Naive thymus-derived CD4-positive, alpha-beta T cell (primary cell): ENCODE measurements at regions of chr9 and their contacts with region 1.

Region 1: DNA sequence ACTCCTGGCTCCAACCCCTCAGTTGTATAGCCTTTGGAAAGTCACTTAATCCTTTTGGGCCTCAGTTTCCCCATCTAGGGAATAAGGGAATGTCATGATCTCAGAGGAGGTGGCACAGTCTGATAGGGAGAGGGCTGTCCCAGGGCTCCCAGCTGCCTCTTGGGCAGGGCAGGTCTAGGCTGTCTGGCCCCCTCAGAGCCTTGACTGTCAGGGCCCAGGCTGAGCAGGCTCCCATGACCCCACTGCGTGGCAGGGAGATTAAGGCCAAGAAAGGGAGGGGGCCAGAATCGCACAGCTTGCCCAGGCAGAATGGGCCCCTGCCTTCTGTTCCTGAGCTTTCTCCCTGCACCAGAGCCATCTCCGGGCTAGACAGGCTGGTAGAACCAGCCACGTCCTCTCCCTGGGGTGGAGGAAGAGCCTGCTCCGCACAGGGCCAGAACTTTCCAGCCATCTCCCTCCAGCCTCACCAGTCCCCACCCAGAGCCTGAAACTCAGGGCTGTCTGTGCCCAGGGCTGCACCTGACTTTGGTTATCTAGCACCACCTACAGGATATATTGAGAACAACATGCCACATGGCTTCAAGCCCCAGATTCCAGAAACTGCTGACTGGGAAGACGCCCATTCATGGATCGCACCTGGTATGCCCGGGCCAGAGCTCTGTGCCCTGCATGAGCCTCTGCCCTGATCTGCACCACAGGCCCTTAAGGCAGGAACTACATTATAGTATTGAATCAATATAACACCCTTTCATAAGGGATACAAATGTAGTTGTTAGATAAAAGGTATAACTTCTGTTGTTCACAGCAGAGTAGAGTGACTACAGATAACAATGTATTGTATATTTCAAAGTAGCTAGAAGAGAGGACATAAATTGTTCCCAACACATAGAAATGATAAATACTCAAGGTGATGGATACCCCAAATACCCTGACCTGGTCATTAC is 32.0 kb downstream of the NAIF1 start:
- DNase-seq: peak; percentile 33 to 86 (median 78)
- ATAC-seq: peak; percentile 82
- H3K4me3 ChIP-seq: peak overlapping the region; percentile 18
- H3K4me3 Mint-ChIP-seq: peak overlapping the region; percentile 44 to 70 (median 60)
- H3K27ac ChIP-seq: peak overlapping the region; percentile 63
- H3K27ac Mint-ChIP-seq: peak overlapping the region; percentile 70 to 96 (median 90)
- H3K4me1 ChIP-seq: peaks cover 40 to 44% of the 10 kb centered on the region in 2 donors
- H3K4me1 Mint-ChIP-seq: peaks cover 8 to 45% (median 37%) of the 10 kb centered on the region in 7 donors
- H3K27me3 ChIP-seq: no peaks in the 10 kb centered on the region
- H3K27me3 Mint-ChIP-seq: no peaks in the 10 kb centered on the region

Region 2: DNA sequence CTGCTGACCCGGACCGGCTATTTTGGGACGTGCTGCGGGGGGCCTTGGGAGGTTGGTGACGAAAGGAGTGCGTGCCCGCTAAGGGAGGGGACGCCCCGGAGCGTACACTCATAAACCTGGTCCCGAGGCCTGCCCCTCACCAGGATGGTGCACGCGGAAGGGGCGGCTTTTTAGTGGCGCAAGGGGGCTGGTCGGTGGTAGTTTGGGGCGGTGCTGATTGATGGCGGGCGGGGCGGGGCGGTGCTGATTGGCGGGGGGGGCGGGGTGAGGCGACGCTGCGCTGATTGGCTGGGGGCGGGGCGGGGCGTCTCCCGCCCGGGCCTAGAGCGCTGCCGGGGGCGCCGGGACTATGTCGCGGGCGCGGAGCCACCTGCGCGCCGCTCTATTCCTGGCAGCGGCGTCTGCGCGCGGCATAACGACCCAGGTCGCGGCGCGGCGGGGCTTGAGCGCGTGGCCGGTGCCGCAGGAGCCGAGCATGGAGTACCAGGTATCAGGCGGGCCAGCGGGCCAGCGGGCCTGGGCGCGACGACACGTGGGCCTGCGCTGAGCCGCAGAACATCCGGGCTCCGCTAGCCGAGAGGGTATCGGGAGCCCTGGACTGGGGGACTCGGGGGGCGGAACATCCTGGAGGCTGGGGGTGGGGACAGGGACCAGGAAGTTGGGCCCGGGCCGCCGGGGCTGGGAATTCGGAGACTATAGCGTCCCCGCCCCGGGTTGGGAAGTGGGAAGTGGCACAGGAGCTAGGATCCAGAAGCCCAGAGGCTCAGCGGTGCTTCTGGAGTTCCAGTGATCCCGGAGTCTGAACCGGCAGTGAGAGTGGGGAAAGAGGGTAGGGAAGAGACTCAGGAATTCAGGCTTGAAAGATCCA is 232.3 kb before region 1 on chr9 and contains the start of gene FPGS:
- CTCF ChIA-PET with region 1: no interaction called
- POLR2A ChIA-PET with region 1: no interaction called
- intact Hi-C with region 1: no loop called
- DNase-seq: peak; percentile 77 to 86 (median 85)
- ATAC-seq: peak; percentile 94
- H3K4me3 ChIP-seq: peak within 1 kb of the TSS; percentile 81
- H3K4me3 Mint-ChIP-seq: peak within 1 kb of the TSS; percentile 81 to 95 (median 90)
- H3K27ac ChIP-seq: peak within 1 kb of the TSS; percentile 93
- H3K27ac Mint-ChIP-seq: peak within 1 kb of the TSS; percentile 80 to 95 (median 89)
- H3K4me1 ChIP-seq: peaks cover 12 to 19% of the 10 kb centered on the region in 2 donors
- H3K4me1 Mint-ChIP-seq: peaks cover 4 to 31% (median 20%) of the 10 kb centered on the region in 7 donors
- H3K27me3 ChIP-seq: no peaks in the 10 kb centered on the region
- H3K27me3 Mint-ChIP-seq: no peaks in the 10 kb centered on the region
- total RNA-seq, gene FPGS: 90.4 to 123 (median 95.4) TPM

Region 3: DNA sequence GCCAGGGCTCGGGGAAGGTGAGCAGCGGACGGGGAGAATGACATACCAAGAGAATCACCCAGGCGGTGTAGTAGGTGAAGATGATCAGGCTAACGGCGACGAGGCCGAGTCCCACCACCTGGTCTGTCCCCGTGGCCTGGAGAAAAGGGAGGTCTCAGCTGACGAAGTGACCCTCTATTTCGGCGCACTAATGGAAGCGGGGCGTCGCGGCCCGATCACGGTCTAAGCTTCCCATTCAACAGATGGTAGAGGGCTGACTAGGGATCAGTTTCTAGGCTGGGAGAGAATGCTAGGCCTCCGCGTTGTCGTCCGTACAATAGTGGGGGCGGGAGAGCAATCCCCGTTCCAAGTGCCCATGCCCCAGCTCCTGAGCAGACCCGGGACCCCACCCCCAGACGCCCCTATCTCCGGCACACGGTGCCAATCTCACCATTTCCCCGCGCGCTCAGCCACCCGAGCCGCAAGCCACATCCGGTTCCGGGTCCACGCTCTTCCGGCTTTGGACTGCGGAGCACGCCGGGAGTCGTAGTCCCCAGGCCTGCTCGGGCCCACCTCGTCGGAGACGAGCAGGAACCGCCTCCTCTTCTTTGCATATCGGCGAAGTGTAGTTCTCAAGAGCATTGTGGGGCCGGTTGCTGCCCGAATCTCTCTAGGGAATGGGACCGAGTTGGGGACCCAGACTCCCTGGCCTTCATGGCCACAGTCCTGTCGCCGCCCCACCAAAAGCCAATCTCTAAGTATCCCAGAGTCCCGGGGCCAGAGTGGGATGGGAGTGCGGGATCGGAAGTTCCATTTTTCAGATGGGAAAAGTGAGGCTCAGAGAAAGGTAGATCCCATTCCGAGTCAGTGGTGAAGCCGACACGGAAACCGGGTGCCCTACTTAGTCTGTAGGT is 97.5 kb before region 1 on chr9 and contains the start of gene DPM2:
- CTCF ChIA-PET with region 1: interaction called, 110 read pairs
- POLR2A ChIA-PET with region 1: interaction called, 62 read pairs
- intact Hi-C with region 1: no loop called
- DNase-seq: peak; percentile 71 to 90 (median 88)
- ATAC-seq: peak; percentile 96
- H3K4me3 ChIP-seq: peak within 1 kb of the TSS; percentile 88
- H3K4me3 Mint-ChIP-seq: peak within 1 kb of the TSS; percentile 85 to 98 (median 92)
- H3K27ac ChIP-seq: peak within 1 kb of the TSS; percentile 78
- H3K27ac Mint-ChIP-seq: peak within 1 kb of the TSS; percentile 88 to 99 (median 95)
- H3K4me1 ChIP-seq: peaks cover 24 to 25% of the 10 kb centered on the region in 2 donors
- H3K4me1 Mint-ChIP-seq: peaks cover 37 to 61% (median 48%) of the 10 kb centered on the region in 7 donors
- H3K27me3 ChIP-seq: no peaks in the 10 kb centered on the region
- H3K27me3 Mint-ChIP-seq: peaks cover 0 to 4% (median 0%) of the 10 kb centered on the region in 5 donors
- total RNA-seq, gene DPM2: 29.1 to 84.4 (median 56.8) TPM

Region 4: GRCh38 chr9:127949827-127950512 is 85.1 kb before region 1 on chr9:
- CTCF ChIA-PET with region 1: interaction called, 253 read pairs
- POLR2A ChIA-PET with region 1: interaction called, 1,511 read pairs
- intact Hi-C with region 1: loop called (anchors 1 kb)
- DNase-seq: no peak
- ATAC-seq: peak; percentile 31
- H3K4me3 ChIP-seq: no peak overlapping the region
- H3K4me3 Mint-ChIP-seq: peak overlapping the region in 9 of 10 donors; percentile 25 to 75 (median 63)
- H3K27ac ChIP-seq: peak overlapping the region; percentile 84
- H3K27ac Mint-ChIP-seq: peak overlapping the region; percentile 58 to 98 (median 90)
- H3K4me1 ChIP-seq: peaks cover 36 to 61% of the 10 kb centered on the region in 2 donors
- H3K4me1 Mint-ChIP-seq: peaks cover 41 to 87% (median 63%) of the 10 kb centered on the region in 7 donors
- H3K27me3 ChIP-seq: no peaks in the 10 kb centered on the region
- H3K27me3 Mint-ChIP-seq: no peaks in the 10 kb centered on the region

Region 5: GRCh38 chr9:127970401-127971313 is 64.4 kb before region 1 on chr9:
- CTCF ChIA-PET with region 1: interaction called, 262 read pairs
- POLR2A ChIA-PET with region 1: interaction called, 1,511 read pairs
- intact Hi-C with region 1: loop called (anchors 1 kb)
- DNase-seq: peak in 8 of 9 donors; percentile 68 to 84 (median 80)
- ATAC-seq: peak; percentile 72
- H3K4me3 ChIP-seq: peak overlapping the region; percentile 93
- H3K4me3 Mint-ChIP-seq: peak overlapping the region; percentile 89 to 99 (median 96)
- H3K27ac ChIP-seq: peak overlapping the region; percentile 84
- H3K27ac Mint-ChIP-seq: peak overlapping the region; percentile 90 to 99 (median 97)
- H3K4me1 ChIP-seq: peaks cover 61 to 93% of the 10 kb centered on the region in 2 donors
- H3K4me1 Mint-ChIP-seq: peaks cover 69 to 95% (median 83%) of the 10 kb centered on the region in 7 donors
- H3K27me3 ChIP-seq: no peaks in the 10 kb centered on the region
- H3K27me3 Mint-ChIP-seq: no peaks in the 10 kb centered on the region

Region 6: GRCh38 chr9:127987103-127987614 is 47.9 kb before region 1 on chr9:
- CTCF ChIA-PET with region 1: interaction called, 262 read pairs
- POLR2A ChIA-PET with region 1: interaction called, 1,511 read pairs
- intact Hi-C with region 1: no loop called
- DNase-seq: no peak
- ATAC-seq: no peak
- H3K4me3 ChIP-seq: no peak overlapping the region
- H3K4me3 Mint-ChIP-seq: no peak overlapping the region
- H3K27ac ChIP-seq: no peak overlapping the region
- H3K27ac Mint-ChIP-seq: peak overlapping the region in 6 of 9 donors; percentile 9 to 80 (median 60)
- H3K4me1 ChIP-seq: peaks cover 0 to 52% of the 10 kb centered on the region in 2 donors
- H3K4me1 Mint-ChIP-seq: peaks cover 27 to 65% (median 58%) of the 10 kb centered on the region in 7 donors
- H3K27me3 ChIP-seq: no peaks in the 10 kb centered on the region
- H3K27me3 Mint-ChIP-seq: no peaks in the 10 kb centered on the region

Region 7: GRCh38 chr9:128020692-128021091 is 14.4 kb before region 1 on chr9:
- CTCF ChIA-PET with region 1: interaction called, 32 read pairs
- POLR2A ChIA-PET with region 1: interaction called, 38 read pairs
- intact Hi-C with region 1: no loop called
- DNase-seq: no peak
- ATAC-seq: no peak
- H3K4me3 ChIP-seq: no peak overlapping the region
- H3K4me3 Mint-ChIP-seq: peak overlapping the region in 6 of 10 donors; percentile 30 to 90 (median 60)
- H3K27ac ChIP-seq: peak overlapping the region; percentile 4
- H3K27ac Mint-ChIP-seq: peak overlapping the region; percentile 79 to 100 (median 98)
- H3K4me1 ChIP-seq: peaks cover 46 to 47% of the 10 kb centered on the region in 2 donors
- H3K4me1 Mint-ChIP-seq: peaks cover 40 to 83% (median 70%) of the 10 kb centered on the region in 7 donors
- H3K27me3 ChIP-seq: no peaks in the 10 kb centered on the region
- H3K27me3 Mint-ChIP-seq: peaks cover 0 to 2% (median 0%) of the 10 kb centered on the region in 5 donors

Region 8: GRCh38 chr9:128117613-128118471 is 82.7 kb after region 1 on chr9:
- CTCF ChIA-PET with region 1: interaction called, 6 read pairs
- POLR2A ChIA-PET with region 1: interaction called, 7 read pairs
- intact Hi-C with region 1: loop called in 1 of 2 experiments (anchors 5 kb)
- DNase-seq: peak; percentile 82 to 99 (median 92)
- ATAC-seq: peak; percentile 97
- H3K4me3 ChIP-seq: no peak overlapping the region
- H3K4me3 Mint-ChIP-seq: peak overlapping the region in 4 of 10 donors; percentile 3 to 59 (median 36)
- H3K27ac ChIP-seq: no peak overlapping the region
- H3K27ac Mint-ChIP-seq: peak overlapping the region in 8 of 9 donors; percentile 11 to 88 (median 60)
- H3K4me1 ChIP-seq: peaks cover 0 to 7% of the 10 kb centered on the region in 2 donors
- H3K4me1 Mint-ChIP-seq: peaks cover 6 to 13% (median 7%) of the 10 kb centered on the region in 7 donors
- H3K27me3 ChIP-seq: no peaks in the 10 kb centered on the region
- H3K27me3 Mint-ChIP-seq: no peaks in the 10 kb centered on the region

Region 9: DNA sequence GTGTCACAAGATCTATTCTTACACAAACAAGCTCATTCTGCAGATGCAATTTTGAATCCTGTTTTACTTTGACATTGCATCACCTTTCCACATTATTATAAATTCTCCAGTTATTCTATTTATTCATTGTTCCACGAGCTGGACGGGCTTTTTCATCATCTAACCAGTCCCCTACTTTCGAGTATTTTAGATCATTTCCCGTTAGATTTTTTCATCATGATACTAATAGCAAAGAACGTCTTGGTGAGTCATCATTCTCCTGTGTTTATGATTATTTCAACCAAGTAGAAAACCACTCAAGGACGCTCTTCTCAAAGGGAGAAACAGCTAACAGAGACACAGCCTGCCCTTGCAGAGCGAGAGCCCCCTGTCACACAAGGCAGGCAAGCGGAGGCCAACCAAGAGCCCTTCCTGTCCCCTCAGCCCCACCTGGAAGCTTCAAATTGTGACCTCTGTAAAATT is 140.0 kb after region 1 on chr9:
- CTCF ChIA-PET with region 1: no interaction called
- POLR2A ChIA-PET with region 1: no interaction called
- intact Hi-C with region 1: no loop called
- DNase-seq: no peak
- ATAC-seq: no peak
- H3K4me3 ChIP-seq: no peak overlapping the region
- H3K4me3 Mint-ChIP-seq: no peak overlapping the region
- H3K27ac ChIP-seq: no peak overlapping the region
- H3K27ac Mint-ChIP-seq: peak overlapping the region in 1 of 9 donors; percentile 63
- H3K4me1 ChIP-seq: no peaks in the 10 kb centered on the region
- H3K4me1 Mint-ChIP-seq: no peaks in the 10 kb centered on the region
- H3K27me3 ChIP-seq: no peaks in the 10 kb centered on the region
- H3K27me3 Mint-ChIP-seq: no peaks in the 10 kb centered on the region